ENCODE measurements at regions of chr13 and their contacts with region 1.

Region 1: DNA sequence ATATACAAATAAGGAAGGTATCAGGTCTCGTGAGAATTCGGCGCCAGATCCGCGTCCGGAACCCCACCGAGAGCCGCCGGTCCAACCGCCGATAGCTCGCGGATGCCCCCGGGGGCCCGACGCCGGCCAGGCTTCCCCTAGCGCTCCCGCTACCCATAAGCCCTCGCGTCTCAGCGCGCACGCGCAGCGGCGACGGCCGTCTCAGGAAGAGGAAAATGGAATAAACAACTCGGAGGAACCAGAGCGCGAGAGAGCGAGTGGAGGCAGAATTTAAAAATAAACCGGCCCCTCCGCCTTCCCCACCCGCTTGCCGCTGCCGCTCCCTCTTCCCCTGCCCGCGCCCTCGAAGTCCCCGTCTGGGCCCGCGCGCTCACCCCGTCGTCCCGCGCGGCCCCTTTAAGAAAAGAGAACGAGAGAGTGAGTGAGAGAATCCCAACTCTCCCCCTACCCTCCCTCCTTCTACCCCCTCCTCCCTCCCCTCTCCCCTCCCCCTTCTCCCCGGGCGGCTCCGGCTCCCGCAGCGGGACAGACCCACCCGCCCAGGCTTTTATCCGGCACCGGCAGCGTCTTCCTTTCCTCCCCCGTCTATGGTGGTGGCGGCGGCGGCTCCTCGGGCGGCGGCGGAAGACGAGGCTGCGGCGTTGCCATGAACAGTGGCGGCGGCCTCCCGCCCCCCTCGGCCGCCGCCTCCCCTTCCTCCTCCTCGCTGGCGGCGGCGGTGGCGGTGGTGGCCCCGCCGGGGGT is at the start of gene PAN3:
- DNase-seq: peak; percentile 90 to 96
- ATAC-seq: peak; percentile 62 to 78 (median 70)
- H3K4me3 ChIP-seq: peak within 1 kb of the TSS; percentile 57
- H3K4me3 Mint-ChIP-seq: peak within 1 kb of the TSS; percentile 80
- H3K27ac ChIP-seq: peak within 1 kb of the TSS; percentile 97
- H3K27ac Mint-ChIP-seq: peak within 1 kb of the TSS; percentile 98 to 99
- H3K4me1 ChIP-seq: peaks cover 22% of the 10 kb centered on the region
- H3K4me1 Mint-ChIP-seq: peaks cover 53 to 60% of the 10 kb centered on the region in 2 donors
- H3K27me3 ChIP-seq: no peaks in the 10 kb centered on the region
- H3K27me3 Mint-ChIP-seq: no peaks in the 10 kb centered on the region
- CTCF ChIP-seq: peak; percentile 30
- total RNA-seq, gene PAN3: 80.0 to 94.2 (median 91.7) TPM

Region 2: GRCh38 chr13:27171827-27172494 is 966.2 kb before region 1 on chr13:
- intact Hi-C with region 1: loop called (anchors 5 kb)
- DNase-seq: peak; percentile 93 to 96
- ATAC-seq: peak; percentile 86 to 97 (median 91)
- H3K4me3 ChIP-seq: peak overlapping the region; percentile 78
- H3K4me3 Mint-ChIP-seq: peak overlapping the region; percentile 94
- H3K27ac ChIP-seq: peak overlapping the region; percentile 96
- H3K27ac Mint-ChIP-seq: peak overlapping the region; percentile 92 to 97
- H3K4me1 ChIP-seq: peaks cover 19% of the 10 kb centered on the region
- H3K4me1 Mint-ChIP-seq: peaks cover 36 to 43% of the 10 kb centered on the region in 2 donors
- H3K27me3 ChIP-seq: no peaks in the 10 kb centered on the region
- H3K27me3 Mint-ChIP-seq: no peaks in the 10 kb centered on the region
- CTCF ChIP-seq: no peak

Region 3: DNA sequence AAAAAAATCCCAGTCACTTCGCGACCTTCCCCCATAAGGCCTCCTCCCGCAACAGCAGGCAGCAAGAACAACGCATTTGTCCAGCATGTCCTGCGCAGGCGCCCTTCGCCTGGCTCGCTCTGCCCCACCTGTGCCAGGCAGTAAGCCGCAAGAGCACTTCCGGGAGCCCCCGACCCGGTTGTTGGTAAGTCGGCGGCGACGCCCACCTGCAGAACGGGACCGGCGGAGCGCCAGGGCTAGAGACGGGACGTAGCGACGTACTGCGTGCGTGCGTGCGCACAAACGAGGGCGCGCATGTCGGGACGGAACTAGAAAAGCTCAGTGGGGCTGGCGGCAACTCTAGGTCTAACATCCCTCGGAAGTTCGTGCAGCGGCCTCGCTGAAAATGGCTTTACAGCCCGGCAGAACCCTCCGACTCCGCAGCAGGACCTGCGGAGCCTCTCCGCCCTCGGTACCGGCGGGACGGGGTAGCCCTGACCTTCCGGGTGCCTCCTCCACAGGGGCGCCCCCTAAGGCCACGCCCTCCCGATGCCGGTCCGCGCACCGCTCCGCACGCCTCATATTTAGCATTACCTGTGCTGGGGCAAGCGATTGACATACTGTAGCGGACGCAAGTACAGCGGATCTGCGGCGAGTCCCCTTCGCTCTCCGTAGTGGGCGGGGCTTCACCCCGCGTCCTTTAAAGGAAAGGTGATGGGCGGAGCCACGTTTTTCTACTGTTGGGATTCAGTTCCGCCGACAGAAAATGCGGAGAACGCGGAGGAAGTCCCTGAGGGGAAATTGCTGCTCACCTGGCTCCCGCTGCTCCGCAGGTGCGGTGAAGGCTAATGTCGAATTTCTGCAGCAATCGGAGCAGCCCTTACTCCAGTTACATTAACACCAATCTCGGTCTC is 688.0 kb before region 1 on chr13 and contains the start of gene MTIF3:
- intact Hi-C with region 1: loop called (anchors 1 kb)
- DNase-seq: peak; percentile 87 to 99
- ATAC-seq: peak; percentile 81 to 93 (median 83)
- H3K4me3 ChIP-seq: peak within 1 kb of the TSS; percentile 84
- H3K4me3 Mint-ChIP-seq: peak within 1 kb of the TSS; percentile 95
- H3K27ac ChIP-seq: peak within 1 kb of the TSS; percentile 94
- H3K27ac Mint-ChIP-seq: peak within 1 kb of the TSS; percentile 97 to 98
- H3K4me1 ChIP-seq: peaks cover 20% of the 10 kb centered on the region
- H3K4me1 Mint-ChIP-seq: peaks cover 44 to 49% of the 10 kb centered on the region in 2 donors
- H3K27me3 ChIP-seq: no peaks in the 10 kb centered on the region
- H3K27me3 Mint-ChIP-seq: no peaks in the 10 kb centered on the region
- CTCF ChIP-seq: no peak
- total RNA-seq, gene MTIF3: 30.2 to 56.6 (median 36.8) TPM

Region 4: GRCh38 chr13:28181413-28181812 is 43.2 kb after region 1 on chr13:
- intact Hi-C with region 1: loop called (anchors 5 kb)
- DNase-seq: no peak
- ATAC-seq: peak in 2 of 3 donors; percentile 49 to 50
- H3K4me3 ChIP-seq: no peak overlapping the region
- H3K4me3 Mint-ChIP-seq: no peak overlapping the region
- H3K27ac ChIP-seq: no peak overlapping the region
- H3K27ac Mint-ChIP-seq: peak overlapping the region; percentile 19 to 48
- H3K4me1 ChIP-seq: no peaks in the 10 kb centered on the region
- H3K4me1 Mint-ChIP-seq: peaks cover 38 to 64% of the 10 kb centered on the region in 2 donors
- H3K27me3 ChIP-seq: no peaks in the 10 kb centered on the region
- H3K27me3 Mint-ChIP-seq: no peaks in the 10 kb centered on the region
- CTCF ChIP-seq: no peak

Region 5: GRCh38 chr13:28268800-28269223 is 130.6 kb after region 1 on chr13:
- intact Hi-C with region 1: loop called (anchors 1 kb)
- DNase-seq: peak in 1 of 2 donors; percentile 38
- ATAC-seq: peak; percentile 88 to 92 (median 91)
- H3K4me3 ChIP-seq: no peak overlapping the region
- H3K4me3 Mint-ChIP-seq: peak overlapping the region; percentile 13
- H3K27ac ChIP-seq: peak overlapping the region; percentile 56
- H3K27ac Mint-ChIP-seq: peak overlapping the region; percentile 81 to 84
- H3K4me1 ChIP-seq: peaks cover 3% of the 10 kb centered on the region
- H3K4me1 Mint-ChIP-seq: peaks cover 9 to 10% of the 10 kb centered on the region in 2 donors
- H3K27me3 ChIP-seq: no peaks in the 10 kb centered on the region
- H3K27me3 Mint-ChIP-seq: no peaks in the 10 kb centered on the region
- CTCF ChIP-seq: no peak

Region 6: GRCh38 chr13:28658796-28659620 is 520.8 kb after region 1 on chr13 and contains the start of gene POMP:
- intact Hi-C with region 1: loop called (anchors 1 kb)
- DNase-seq: peak; percentile 91 to 95
- ATAC-seq: peak; percentile 85 to 93 (median 91)
- H3K4me3 ChIP-seq: peak within 1 kb of the TSS; percentile 82
- H3K4me3 Mint-ChIP-seq: peak within 1 kb of the TSS; percentile 94
- H3K27ac ChIP-seq: peak within 1 kb of the TSS; percentile 89
- H3K27ac Mint-ChIP-seq: peak within 1 kb of the TSS; percentile 93 to 96
- H3K4me1 ChIP-seq: peaks cover 17% of the 10 kb centered on the region
- H3K4me1 Mint-ChIP-seq: peaks cover 46 to 70% of the 10 kb centered on the region in 2 donors
- H3K27me3 ChIP-seq: no peaks in the 10 kb centered on the region
- H3K27me3 Mint-ChIP-seq: no peaks in the 10 kb centered on the region
- CTCF ChIP-seq: no peak
- total RNA-seq, gene POMP: 33.0 to 42.2 (median 36.0) TPM

Region 7: DNA sequence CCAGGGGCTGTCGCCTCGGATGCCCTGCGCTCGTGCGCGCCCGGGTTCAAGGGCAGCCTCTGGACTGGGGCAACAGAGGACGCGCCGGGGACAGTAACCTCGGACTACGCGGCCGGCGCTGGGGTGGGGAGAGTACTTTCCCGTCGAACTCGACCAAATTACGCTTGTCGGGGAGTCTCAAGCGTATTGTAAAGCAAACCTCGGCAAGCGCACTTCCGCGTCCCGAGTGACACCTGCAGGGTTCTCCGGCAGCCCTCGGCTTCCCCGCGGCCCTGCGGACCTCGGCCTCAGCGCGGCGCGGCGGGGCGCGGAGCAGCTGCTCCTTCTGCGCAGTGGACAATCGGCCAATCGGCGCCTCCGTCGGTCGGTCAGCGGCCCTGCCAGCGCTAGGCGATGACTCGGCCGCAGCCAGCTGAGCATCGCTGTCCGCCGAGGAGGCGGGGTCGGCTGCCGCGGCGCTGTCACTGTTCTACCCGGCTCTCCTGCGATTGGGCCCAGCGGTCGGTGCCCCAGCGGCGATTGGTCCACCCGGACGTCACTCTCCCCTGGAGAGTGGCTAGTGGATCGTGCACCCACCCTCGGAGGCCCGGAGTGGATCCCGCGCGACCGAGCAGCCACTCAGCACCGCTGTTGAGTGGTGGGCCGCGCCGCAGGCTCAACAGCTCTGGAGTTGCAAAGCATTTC is 580.5 kb after region 1 on chr13 and contains the start of gene SLC46A3:
- intact Hi-C with region 1: loop called (anchors 2 kb)
- DNase-seq: peak; percentile 97 to 98
- ATAC-seq: peak; percentile 96 to 99 (median 97)
- H3K4me3 ChIP-seq: peak within 1 kb of the TSS; percentile 82
- H3K4me3 Mint-ChIP-seq: peak within 1 kb of the TSS; percentile 99
- H3K27ac ChIP-seq: peak within 1 kb of the TSS; percentile 92
- H3K27ac Mint-ChIP-seq: peak within 1 kb of the TSS; percentile 91 to 94
- H3K4me1 ChIP-seq: peaks cover 5% of the 10 kb centered on the region
- H3K4me1 Mint-ChIP-seq: peaks cover 31 to 32% of the 10 kb centered on the region in 2 donors
- H3K27me3 ChIP-seq: no peaks in the 10 kb centered on the region
- H3K27me3 Mint-ChIP-seq: no peaks in the 10 kb centered on the region
- CTCF ChIP-seq: peak; percentile 9
- total RNA-seq, gene SLC46A3: 9.7 to 16.2 (median 11.9) TPM